ENCODE measurements at regions of chr19 and their contacts with region 1.

Region 1: DNA sequence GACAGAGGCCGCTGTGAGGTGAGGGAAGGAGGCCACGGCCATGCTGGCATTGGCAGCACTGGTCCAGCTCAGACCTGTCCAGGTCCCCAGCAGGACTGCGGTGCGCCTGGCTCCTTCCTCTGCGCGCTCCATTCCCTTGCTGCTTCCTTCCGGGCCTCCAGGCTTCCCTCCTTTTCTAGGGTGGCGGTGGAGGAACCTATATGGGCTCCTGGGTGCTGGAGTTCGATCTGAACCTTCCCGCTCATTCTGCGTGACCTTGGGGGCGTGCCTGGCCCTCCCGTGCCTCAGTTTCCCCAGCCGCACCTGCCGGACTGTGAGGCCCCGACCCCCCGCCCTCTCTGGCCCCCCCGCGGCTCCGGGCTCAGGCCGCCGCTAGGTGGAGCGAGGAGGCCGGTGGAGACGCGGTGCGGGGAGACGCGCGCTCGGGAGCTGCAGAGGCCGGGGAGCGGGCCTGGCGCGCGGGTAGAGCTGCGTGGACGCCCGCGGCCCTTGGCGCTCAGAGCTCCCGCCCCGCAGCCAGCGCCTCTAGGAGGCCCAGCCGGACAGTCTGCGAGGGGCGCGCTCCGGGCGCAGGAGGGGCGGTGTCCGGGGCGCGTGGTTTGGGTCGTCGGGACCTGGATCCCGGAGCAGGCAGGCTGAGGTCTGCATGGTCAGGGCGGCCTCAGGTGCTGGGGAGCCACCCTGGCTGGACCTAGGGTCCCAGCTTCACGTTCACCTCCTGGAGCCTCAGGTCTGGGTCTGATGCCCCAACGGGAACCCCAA is 30.0 kb downstream of the EFNA2 start:
- DNase-seq: peak in 5 of 9 donors; percentile 16 to 57 (median 23)
- ATAC-seq: peak; percentile 61
- H3K4me3 ChIP-seq: no peak overlapping the region
- H3K4me3 Mint-ChIP-seq: peak overlapping the region in 1 of 10 donors; percentile 11
- H3K27ac ChIP-seq: no peak overlapping the region
- H3K27ac Mint-ChIP-seq: no peak overlapping the region
- H3K4me1 ChIP-seq: peaks cover 0 to 3% of the 10 kb centered on the region in 2 donors
- H3K4me1 Mint-ChIP-seq: peaks cover 0 to 5% (median 0%) of the 10 kb centered on the region in 7 donors
- H3K27me3 ChIP-seq: peaks cover 0 to 10% of the 10 kb centered on the region in 2 donors
- H3K27me3 Mint-ChIP-seq: peaks cover 11 to 26% (median 13%) of the 10 kb centered on the region in 5 donors

Region 2: DNA sequence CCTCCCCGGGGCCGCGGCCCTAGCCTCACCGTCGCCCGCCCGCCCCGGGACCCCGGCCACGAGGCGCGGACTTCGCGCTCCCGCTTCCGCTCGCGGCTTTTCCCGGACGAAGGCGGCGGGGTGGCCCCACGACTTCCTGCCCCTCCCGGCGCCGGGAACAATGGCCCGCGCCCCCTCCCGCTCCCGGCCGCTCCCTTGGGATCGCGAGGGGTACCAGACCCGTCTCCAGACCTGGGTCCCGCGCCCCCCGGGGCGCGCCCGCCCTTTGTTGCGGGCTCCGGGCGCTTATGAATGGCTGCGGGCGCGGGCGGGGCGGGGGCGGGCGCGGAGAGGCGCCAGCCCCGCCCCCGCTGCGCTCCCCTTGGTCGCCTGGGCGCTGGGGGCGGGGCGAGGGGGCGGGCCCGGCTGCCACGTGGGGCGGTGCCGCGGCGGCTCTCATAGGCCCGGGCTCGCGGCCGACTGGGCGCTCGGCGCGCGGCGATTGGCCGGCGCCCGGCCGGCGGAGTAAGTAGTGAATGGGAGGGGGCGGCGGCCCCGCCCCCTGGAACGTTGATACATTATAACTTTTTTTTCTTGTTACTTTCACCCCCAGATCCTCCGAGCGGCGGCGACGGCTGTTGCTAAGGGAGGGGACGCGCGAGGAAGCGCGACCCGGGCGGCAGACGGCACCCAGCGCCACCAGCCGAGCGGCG is 66.2 kb before region 1 on chr19:
- CTCF ChIA-PET with region 1: no interaction called
- POLR2A ChIA-PET with region 1: no interaction called
- intact Hi-C with region 1: no loop called
- DNase-seq: peak; percentile 88 to 97 (median 94)
- ATAC-seq: peak; percentile 74
- H3K4me3 ChIP-seq: peak overlapping the region; percentile 63
- H3K4me3 Mint-ChIP-seq: peak overlapping the region; percentile 80 to 95 (median 88)
- H3K27ac ChIP-seq: peak overlapping the region; percentile 94
- H3K27ac Mint-ChIP-seq: peak overlapping the region; percentile 62 to 95 (median 89)
- H3K4me1 ChIP-seq: peaks cover 22 to 27% of the 10 kb centered on the region in 2 donors
- H3K4me1 Mint-ChIP-seq: peaks cover 0 to 11% (median 10%) of the 10 kb centered on the region in 7 donors
- H3K27me3 ChIP-seq: no peaks in the 10 kb centered on the region
- H3K27me3 Mint-ChIP-seq: no peaks in the 10 kb centered on the region

Region 3: DNA sequence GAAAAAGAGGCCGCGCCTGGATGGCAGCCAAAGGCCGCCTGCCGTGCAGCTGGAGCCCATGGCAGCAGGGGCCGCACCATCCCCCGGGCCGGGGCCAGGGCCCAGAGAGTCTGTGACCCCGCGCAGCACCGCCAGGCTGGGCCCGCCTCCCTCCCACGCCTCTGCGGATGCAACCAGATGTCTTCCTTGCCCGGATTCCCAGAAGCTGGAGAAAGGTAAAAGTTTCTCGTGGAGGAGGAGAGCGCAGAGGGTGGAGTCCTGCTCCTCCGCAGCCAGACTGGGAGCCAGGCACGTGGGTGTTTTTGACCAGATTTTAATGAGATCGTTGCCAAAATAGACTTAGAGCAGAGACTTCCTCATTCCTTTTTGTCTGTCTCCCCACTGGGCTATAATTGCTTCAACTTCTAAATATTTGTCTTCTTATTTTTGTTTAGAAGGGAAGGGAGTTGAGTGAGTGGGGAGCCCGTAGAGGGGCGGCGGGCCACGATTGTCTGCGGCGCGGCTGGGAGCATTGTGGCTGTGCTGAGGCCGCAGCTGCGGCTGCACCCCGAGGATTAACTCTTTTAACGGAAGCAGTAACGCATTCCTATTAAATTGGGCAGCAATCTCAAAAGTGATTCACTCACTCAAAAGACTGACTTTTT is 45.3 kb after region 1 on chr19:
- CTCF ChIA-PET with region 1: no interaction called
- POLR2A ChIA-PET with region 1: no interaction called
- intact Hi-C with region 1: loop called in 1 of 2 experiments (anchors 5 kb)
- DNase-seq: no peak
- ATAC-seq: no peak
- H3K4me3 ChIP-seq: no peak overlapping the region
- H3K4me3 Mint-ChIP-seq: no peak overlapping the region
- H3K27ac ChIP-seq: no peak overlapping the region
- H3K27ac Mint-ChIP-seq: no peak overlapping the region
- H3K4me1 ChIP-seq: peaks cover 3 to 13% of the 10 kb centered on the region in 2 donors
- H3K4me1 Mint-ChIP-seq: peaks cover 20 to 46% (median 40%) of the 10 kb centered on the region in 7 donors
- H3K27me3 ChIP-seq: no peaks in the 10 kb centered on the region
- H3K27me3 Mint-ChIP-seq: no peaks in the 10 kb centered on the region

Region 4: GRCh38 chr19:1373534-1374249 is 58.0 kb after region 1 on chr19:
- CTCF ChIA-PET with region 1: interaction called, 4 read pairs
- POLR2A ChIA-PET with region 1: no interaction called
- intact Hi-C with region 1: loop called in 1 of 2 experiments (anchors 1 kb)
- DNase-seq: no peak
- ATAC-seq: no peak
- H3K4me3 ChIP-seq: no peak overlapping the region
- H3K4me3 Mint-ChIP-seq: no peak overlapping the region
- H3K27ac ChIP-seq: no peak overlapping the region
- H3K27ac Mint-ChIP-seq: no peak overlapping the region
- H3K4me1 ChIP-seq: no peaks in the 10 kb centered on the region
- H3K4me1 Mint-ChIP-seq: peaks cover 0 to 4% (median 0%) of the 10 kb centered on the region in 7 donors
- H3K27me3 ChIP-seq: no peaks in the 10 kb centered on the region
- H3K27me3 Mint-ChIP-seq: no peaks in the 10 kb centered on the region

Measured in naive thymus-derived CD4-positive, alpha-beta T cell (primary cell).